Tibial artery (tissue), 4 donors: ENCODE measurements at regions of chr17 and their contacts with region 1.

Region 1: DNA sequence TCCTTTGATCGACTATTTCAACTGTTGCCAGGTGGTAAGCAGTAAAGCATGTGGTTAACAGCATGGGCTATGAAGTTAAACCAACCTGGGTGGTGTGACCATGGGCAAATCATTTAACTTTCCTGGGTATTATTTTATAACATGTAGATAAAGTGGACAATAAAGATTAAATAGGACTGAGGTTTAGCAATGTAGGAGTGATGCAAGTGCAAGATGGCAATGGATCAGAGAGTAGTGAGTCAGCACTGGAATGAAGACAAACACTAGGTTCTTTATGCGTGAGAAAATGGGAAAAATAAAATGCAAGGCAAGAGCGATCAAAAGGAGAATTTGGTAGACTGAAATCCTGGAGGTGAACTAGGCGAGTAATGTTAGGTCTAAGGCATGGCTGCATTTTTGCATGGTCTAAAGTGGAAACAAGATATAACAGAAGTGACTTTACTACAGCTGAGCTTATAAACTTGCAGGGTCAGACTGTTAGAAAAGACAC is 222.4 kb upstream of the AXIN2 start:
- DNase-seq: no peak
- H3K4me3 ChIP-seq: no peak overlapping the region
- H3K27ac ChIP-seq: peak overlapping the region; percentile 23 to 48
- H3K4me1 ChIP-seq: peaks cover 0 to 24% (median 11%) of the 10 kb centered on the region in 4 donors
- H3K27me3 ChIP-seq: no peaks in the 10 kb centered on the region
- CTCF ChIP-seq: no peak

Region 2: GRCh38 chr17:65324611-65325342 is 459.1 kb before region 1 on chr17:
- intact Hi-C with region 1: no loop called
- DNase-seq: peak in 1 of 2 donors; percentile 64
- H3K4me3 ChIP-seq: no peak overlapping the region
- H3K27ac ChIP-seq: no peak overlapping the region
- H3K4me1 ChIP-seq: no peaks in the 10 kb centered on the region
- H3K27me3 ChIP-seq: no peaks in the 10 kb centered on the region
- CTCF ChIP-seq: no peak

Region 3: GRCh38 chr17:65561394-65562205 is 222.3 kb before region 1 on chr17 and contains the start of gene AXIN2:
- intact Hi-C with region 1: loop called (anchors 5 kb)
- DNase-seq: peak; percentile 88 to 93
- H3K4me3 ChIP-seq: peak within 1 kb of the TSS; percentile 87 to 94
- H3K27ac ChIP-seq: peak within 1 kb of the TSS; percentile 89 to 91
- H3K4me1 ChIP-seq: peaks cover 0 to 31% (median 13%) of the 10 kb centered on the region in 4 donors
- H3K27me3 ChIP-seq: no peaks in the 10 kb centered on the region
- CTCF ChIP-seq: peak in 1 of 2 experiments; percentile 34

Region 4: GRCh38 chr17:65723385-65724151 is 60.3 kb before region 1 on chr17:
- intact Hi-C with region 1: no loop called
- DNase-seq: no peak
- H3K4me3 ChIP-seq: no peak overlapping the region
- H3K27ac ChIP-seq: no peak overlapping the region
- H3K4me1 ChIP-seq: peaks cover 0 to 10% (median 8%) of the 10 kb centered on the region in 4 donors
- H3K27me3 ChIP-seq: no peaks in the 10 kb centered on the region
- CTCF ChIP-seq: no peak

Region 5: GRCh38 chr17:66002812-66003211 is 218.9 kb after region 1 on chr17:
- intact Hi-C with region 1: no loop called
- DNase-seq: no peak
- H3K4me3 ChIP-seq: no peak overlapping the region
- H3K27ac ChIP-seq: no peak overlapping the region
- H3K4me1 ChIP-seq: peaks cover 0 to 14% (median 0%) of the 10 kb centered on the region in 4 donors
- H3K27me3 ChIP-seq: no peaks in the 10 kb centered on the region
- CTCF ChIP-seq: no peak